ENCODE measurements at regions of chrX and their contacts with region 1.

Region 1: DNA sequence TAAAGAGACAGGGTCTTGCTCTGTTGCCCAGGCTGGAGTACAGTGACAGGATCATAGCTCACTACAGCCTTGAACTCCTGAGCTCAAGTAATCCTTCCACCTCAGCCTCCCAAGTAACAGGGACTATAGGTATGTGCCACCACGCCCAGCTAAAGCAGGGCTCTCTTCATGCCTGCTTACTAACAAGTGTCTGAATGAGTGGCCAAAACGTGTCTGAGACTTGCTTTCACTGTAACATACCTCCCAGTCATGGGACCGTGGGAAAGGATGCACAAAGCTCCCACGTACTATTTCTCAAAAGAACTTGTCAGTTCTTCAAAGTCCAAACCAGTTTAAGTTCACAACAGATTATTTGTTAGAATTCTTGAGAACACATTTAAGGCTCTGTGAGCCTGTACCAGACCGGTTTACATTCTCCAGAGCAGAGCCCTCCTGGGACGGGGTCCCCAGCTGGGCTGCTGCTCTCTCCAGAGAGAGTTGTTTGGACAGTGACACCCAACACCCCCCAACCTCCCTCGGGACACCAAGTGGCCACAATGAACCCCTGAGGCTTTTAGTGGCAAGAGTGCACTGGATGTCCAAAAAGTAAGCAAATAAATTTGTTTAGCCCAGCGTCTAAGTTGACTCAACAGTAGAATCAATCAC is 24.1 kb downstream of the SH3KBP1 start:
- DNase-seq: peak; percentile 88
- ATAC-seq: peak; percentile 70
- H3K4me3 ChIP-seq: 0 out of 2 replicates have a peak overlapping the region, but pooled peaks have one; percentile 39
- H3K27ac ChIP-seq: peak overlapping the region; percentile 93
- H3K4me1 ChIP-seq: peaks cover 52% of the 10 kb centered on the region
- H3K27me3 ChIP-seq: no peaks in the 10 kb centered on the region
- CTCF ChIP-seq: no peak
- EP300 ChIP-seq: peak; percentile 35 to 69; a peak in 2 of 4 replicates
- POLR2A ChIP-seq: no peak
- RAD21 ChIP-seq: 0 out of 2 replicates have a peak, but pooled peaks have one; percentile 2

Region 2: GRCh38 chrX:19682712-19683331 is 180.5 kb before region 1 on chrX:
- CTCF ChIA-PET with region 1: no interaction called
- POLR2A ChIA-PET with region 1: no interaction called
- RAD21 ChIA-PET with region 1: interaction called, 4 read pairs
- SMC1A ChIA-PET with region 1: no interaction called
- in situ Hi-C with region 1: no loop called
- intact Hi-C with region 1: loop called (anchors 5 kb)
- DNase-seq: no peak
- ATAC-seq: peak; percentile 86
- H3K4me3 ChIP-seq: no peak overlapping the region
- H3K27ac ChIP-seq: no peak overlapping the region
- H3K4me1 ChIP-seq: peaks cover 11% of the 10 kb centered on the region
- H3K27me3 ChIP-seq: no peaks in the 10 kb centered on the region; a peak in 1 of 4 replicates
- CTCF ChIP-seq: no peak
- EP300 ChIP-seq: peak in 1 of 2 experiments; percentile 49; a peak in 2 of 4 replicates
- POLR2A ChIP-seq: peak; percentile 35; the same call in 1 of the 2 replicates
- RAD21 ChIP-seq: no peak

Region 3: GRCh38 chrX:19758539-19758938 is 104.8 kb before region 1 on chrX:
- CTCF ChIA-PET with region 1: no interaction called
- POLR2A ChIA-PET with region 1: interaction called, 4 read pairs
- RAD21 ChIA-PET with region 1: interaction called, 5 read pairs
- SMC1A ChIA-PET with region 1: interaction called, 10 read pairs
- in situ Hi-C with region 1: no loop called
- intact Hi-C with region 1: no loop called
- DNase-seq: no peak
- ATAC-seq: peak; percentile 69
- H3K4me3 ChIP-seq: no peak overlapping the region
- H3K27ac ChIP-seq: peak overlapping the region; percentile 13; the same call in 1 of the 2 replicates
- H3K4me1 ChIP-seq: peaks cover 46% of the 10 kb centered on the region
- H3K27me3 ChIP-seq: no peaks in the 10 kb centered on the region
- CTCF ChIP-seq: no peak
- EP300 ChIP-seq: no peak
- POLR2A ChIP-seq: no peak
- RAD21 ChIP-seq: no peak

Region 4: GRCh38 chrX:19791562-19791961 is 71.8 kb before region 1 on chrX:
- CTCF ChIA-PET with region 1: no interaction called
- POLR2A ChIA-PET with region 1: interaction called, 3 read pairs
- RAD21 ChIA-PET with region 1: interaction called, 5 read pairs
- SMC1A ChIA-PET with region 1: interaction called, 11 read pairs
- in situ Hi-C with region 1: no loop called
- intact Hi-C with region 1: loop called (anchors 5 kb)
- DNase-seq: no peak
- ATAC-seq: peak; percentile 76
- H3K4me3 ChIP-seq: 0 out of 2 replicates have a peak overlapping the region, but pooled peaks have one; percentile 11
- H3K27ac ChIP-seq: peak overlapping the region; percentile 69
- H3K4me1 ChIP-seq: peaks cover 17% of the 10 kb centered on the region
- H3K27me3 ChIP-seq: no peaks in the 10 kb centered on the region
- CTCF ChIP-seq: no peak
- EP300 ChIP-seq: no peak
- POLR2A ChIP-seq: no peak
- RAD21 ChIP-seq: no peak

Region 5: DNA sequence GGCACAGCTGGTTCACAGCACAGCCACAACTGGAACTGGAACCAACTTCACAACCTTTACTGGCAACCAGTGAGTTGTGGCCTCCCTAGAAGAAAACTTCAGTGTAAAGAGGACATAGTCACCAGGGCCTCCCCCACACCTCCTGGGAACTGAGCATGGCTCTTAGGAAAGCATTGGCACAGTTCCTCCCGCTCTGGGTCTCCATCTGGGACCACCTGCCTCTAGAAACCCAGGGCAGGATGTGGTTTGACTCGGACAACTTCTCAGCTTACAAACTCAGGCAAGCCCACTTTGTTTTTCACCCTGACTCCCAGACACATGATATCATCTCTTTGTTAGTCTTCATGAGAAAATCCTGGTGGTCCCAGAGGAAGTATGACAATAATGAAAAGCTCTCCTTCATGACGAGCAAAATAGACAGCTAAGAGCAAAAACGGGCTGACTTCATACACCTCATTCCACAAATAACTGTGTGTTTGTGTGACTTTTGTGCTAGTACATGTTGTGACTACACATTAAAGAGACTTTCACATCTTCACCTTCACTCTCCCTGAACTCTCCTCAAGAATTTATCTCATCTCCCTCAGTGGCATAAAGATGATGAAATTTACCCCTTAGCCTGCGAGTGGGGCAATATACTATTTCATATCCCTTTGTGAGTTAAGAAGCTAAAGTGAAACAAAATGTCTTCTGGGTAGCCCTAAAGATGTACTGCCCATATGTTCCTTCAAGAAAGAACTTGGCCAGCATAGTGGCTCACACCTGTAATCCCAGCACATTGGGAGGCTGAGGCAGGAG is 51.3 kb before region 1 on chrX:
- CTCF ChIA-PET with region 1: interaction called, 4 read pairs
- POLR2A ChIA-PET with region 1: interaction called, 9 read pairs
- RAD21 ChIA-PET with region 1: interaction called, 24 read pairs
- SMC1A ChIA-PET with region 1: interaction called, 15 read pairs
- in situ Hi-C with region 1: no loop called
- intact Hi-C with region 1: no loop called
- DNase-seq: no peak
- ATAC-seq: peak; percentile 41
- H3K4me3 ChIP-seq: no peak overlapping the region
- H3K27ac ChIP-seq: peak overlapping the region; percentile 87
- H3K4me1 ChIP-seq: peaks cover 30% of the 10 kb centered on the region
- H3K27me3 ChIP-seq: no peaks in the 10 kb centered on the region
- CTCF ChIP-seq: no peak
- EP300 ChIP-seq: no peak
- POLR2A ChIP-seq: no peak
- RAD21 ChIP-seq: no peak

Region 6: GRCh38 chrX:19846995-19847790 is 16.1 kb before region 1 on chrX:
- CTCF ChIA-PET with region 1: interaction called, 8 read pairs
- POLR2A ChIA-PET with region 1: interaction called, 23 read pairs
- RAD21 ChIA-PET with region 1: interaction called, 53 read pairs
- SMC1A ChIA-PET with region 1: interaction called, 75 read pairs
- in situ Hi-C with region 1: no loop called
- intact Hi-C with region 1: no loop called
- DNase-seq: no peak
- ATAC-seq: peak; percentile 55
- H3K4me3 ChIP-seq: 0 out of 2 replicates have a peak overlapping the region, but pooled peaks have one; percentile 8
- H3K27ac ChIP-seq: peak overlapping the region; percentile 79
- H3K4me1 ChIP-seq: peaks cover 38% of the 10 kb centered on the region
- H3K27me3 ChIP-seq: no peaks in the 10 kb centered on the region
- CTCF ChIP-seq: no peak
- EP300 ChIP-seq: no peak
- POLR2A ChIP-seq: no peak
- RAD21 ChIP-seq: no peak

Region 7: GRCh38 chrX:19882066-19882785 is 18.9 kb after region 1 on chrX:
- CTCF ChIA-PET with region 1: interaction called, 12 read pairs
- POLR2A ChIA-PET with region 1: interaction called, 18 read pairs
- RAD21 ChIA-PET with region 1: interaction called, 73 read pairs
- SMC1A ChIA-PET with region 1: interaction called, 27 read pairs
- in situ Hi-C with region 1: no loop called
- intact Hi-C with region 1: loop called (anchors 1 kb)
- DNase-seq: no peak
- ATAC-seq: no peak
- H3K4me3 ChIP-seq: peak overlapping the region; percentile 83
- H3K27ac ChIP-seq: peak overlapping the region; percentile 36; the same call in 1 of the 2 replicates
- H3K4me1 ChIP-seq: peaks cover 13% of the 10 kb centered on the region
- H3K27me3 ChIP-seq: no peaks in the 10 kb centered on the region
- CTCF ChIP-seq: no peak
- EP300 ChIP-seq: no peak
- POLR2A ChIP-seq: no peak
- RAD21 ChIP-seq: no peak